ENCODE measurements at regions of chr16 and their contacts with region 1.

Region 1: GRCh38 chr16:3983081-3983520 is 102.6 kb upstream of the CREBBP start:
- DNase-seq: peak; percentile 70
- H3K4me3 ChIP-seq: no peak overlapping the region
- H3K27ac ChIP-seq: no peak overlapping the region
- H3K4me1 ChIP-seq: peaks cover 16% of the 10 kb centered on the region
- H3K27me3 ChIP-seq: no peaks in the 10 kb centered on the region
- CTCF ChIP-seq: peak; percentile 90

Region 2: DNA sequence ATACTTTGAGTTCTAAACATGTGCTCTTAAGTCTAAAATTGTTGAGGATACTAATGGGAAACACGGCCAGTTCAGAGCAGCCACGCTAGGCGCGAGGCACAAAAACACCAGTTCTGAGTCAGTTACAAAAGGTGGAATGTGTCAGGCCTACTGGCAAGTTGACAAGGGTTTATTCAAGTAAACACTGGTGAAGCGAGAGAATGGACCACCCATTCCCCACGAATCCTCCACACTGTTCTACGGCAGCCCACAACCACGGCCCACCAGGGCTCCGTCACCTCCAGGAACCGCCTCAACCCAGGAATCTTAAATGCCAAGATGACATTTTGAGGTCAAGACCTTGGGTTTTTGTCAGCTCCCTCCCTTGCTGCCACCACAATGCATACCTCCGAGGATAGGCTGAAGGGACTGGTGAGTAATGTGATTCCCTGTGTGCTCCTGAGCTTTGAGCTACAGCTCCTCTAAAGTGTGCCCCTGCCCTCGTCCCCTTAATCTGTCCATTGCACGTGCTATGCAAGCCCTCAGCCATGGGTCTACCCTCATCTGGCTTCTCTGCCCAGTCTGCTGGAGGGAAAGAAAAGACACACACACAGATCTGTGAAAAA is 237.2 kb before region 1 on chr16:
- CTCF ChIA-PET with region 1: no interaction called
- POLR2A ChIA-PET with region 1: no interaction called
- intact Hi-C with region 1: no loop called
- DNase-seq: no peak
- H3K4me3 ChIP-seq: no peak overlapping the region
- H3K27ac ChIP-seq: no peak overlapping the region
- H3K4me1 ChIP-seq: no peaks in the 10 kb centered on the region
- H3K27me3 ChIP-seq: no peaks in the 10 kb centered on the region
- CTCF ChIP-seq: no peak

Region 3: DNA sequence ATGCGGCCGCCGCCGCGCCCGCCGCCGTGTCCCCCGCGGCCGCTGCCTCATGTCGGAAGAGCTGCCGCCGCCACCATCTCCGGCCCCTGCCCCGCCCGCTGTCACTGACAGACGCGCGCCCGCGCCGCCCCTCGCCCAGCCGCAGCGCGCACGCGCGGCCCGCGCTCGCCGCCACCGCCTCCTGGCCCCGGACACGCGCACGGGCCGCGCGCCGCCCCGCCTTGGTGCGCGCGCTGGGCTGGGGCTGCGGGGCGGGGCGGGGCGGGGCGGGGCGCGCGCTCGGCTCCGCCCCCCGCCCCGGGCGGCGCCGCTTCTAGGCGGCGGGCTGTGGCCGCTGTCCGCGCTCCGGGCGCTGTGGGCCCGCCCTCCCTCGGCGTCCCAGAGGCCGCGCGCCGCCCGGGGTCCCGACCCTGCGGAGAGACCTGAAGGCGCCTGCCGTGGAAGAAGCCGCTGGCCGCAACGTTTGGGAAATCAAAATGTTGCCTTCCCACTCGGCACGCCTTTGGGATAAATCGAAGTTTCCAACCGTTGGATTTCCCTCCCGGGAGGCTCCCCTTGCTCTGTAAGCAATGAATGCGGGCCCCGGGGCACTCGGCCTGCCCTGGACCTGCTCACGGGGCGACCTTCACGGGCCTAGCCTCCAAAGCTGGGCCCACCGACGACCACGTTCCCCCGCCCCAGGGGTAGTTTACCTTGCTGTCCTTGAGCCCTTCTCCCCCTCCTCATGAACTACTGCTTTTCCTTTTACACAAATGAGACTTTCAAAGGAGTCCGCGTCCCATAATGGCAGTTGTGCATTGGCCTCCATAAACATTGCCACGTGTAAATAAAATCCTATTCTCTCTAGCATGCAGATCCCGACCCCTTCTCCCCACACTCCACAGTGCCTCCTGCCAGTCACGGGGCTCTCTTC is 133.5 kb after region 1 on chr16 and contains the start of gene ADCY9:
- CTCF ChIA-PET with region 1: no interaction called
- POLR2A ChIA-PET with region 1: no interaction called
- intact Hi-C with region 1: loop called (anchors 5 kb)
- DNase-seq: peak; percentile 90
- H3K4me3 ChIP-seq: peak within 1 kb of the TSS; percentile 69
- H3K27ac ChIP-seq: peak within 1 kb of the TSS; percentile 82
- H3K4me1 ChIP-seq: peaks cover 12% of the 10 kb centered on the region
- H3K27me3 ChIP-seq: no peaks in the 10 kb centered on the region
- CTCF ChIP-seq: 0 out of 2 replicates have a peak, but pooled peaks have one; percentile 15
- total RNA-seq, gene ADCY9: 7.0 and 8.8 TPM in 2 replicates

Region 4: DNA sequence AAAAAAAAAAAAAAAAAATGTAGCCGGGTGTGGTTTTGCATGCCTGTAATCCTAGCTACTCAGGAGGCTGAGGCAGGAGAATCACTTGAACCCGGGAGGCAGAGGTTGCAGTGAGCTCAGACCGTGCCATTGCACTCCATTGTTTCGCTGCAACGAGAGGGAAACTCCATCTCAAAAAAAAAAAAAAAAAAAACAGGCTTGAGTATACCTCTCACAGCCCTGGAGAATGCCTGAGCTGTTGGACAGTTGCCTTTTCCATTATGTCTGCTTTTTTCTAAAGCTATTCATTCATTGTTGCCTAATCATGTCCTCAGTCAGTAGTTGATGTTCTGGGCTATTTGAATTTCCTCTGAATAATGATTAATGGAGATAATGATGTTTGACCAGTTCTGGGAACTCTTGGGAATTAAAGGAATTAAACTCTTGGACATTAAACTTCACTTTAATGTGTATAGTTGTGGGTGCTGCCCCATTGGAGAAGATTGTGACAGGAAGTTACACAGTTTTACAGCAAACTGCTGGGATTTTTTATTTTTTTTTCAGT is 504.9 kb after region 1 on chr16:
- CTCF ChIA-PET with region 1: interaction called, 16 read pairs
- POLR2A ChIA-PET with region 1: no interaction called
- intact Hi-C with region 1: no loop called
- DNase-seq: no peak
- H3K4me3 ChIP-seq: no peak overlapping the region
- H3K27ac ChIP-seq: no peak overlapping the region
- H3K4me1 ChIP-seq: no peaks in the 10 kb centered on the region
- H3K27me3 ChIP-seq: no peaks in the 10 kb centered on the region
- CTCF ChIP-seq: no peak

Measured in A673 (cell line).